ENCODE measurements at regions of chr17 and their contacts with region 1.

Region 1: DNA sequence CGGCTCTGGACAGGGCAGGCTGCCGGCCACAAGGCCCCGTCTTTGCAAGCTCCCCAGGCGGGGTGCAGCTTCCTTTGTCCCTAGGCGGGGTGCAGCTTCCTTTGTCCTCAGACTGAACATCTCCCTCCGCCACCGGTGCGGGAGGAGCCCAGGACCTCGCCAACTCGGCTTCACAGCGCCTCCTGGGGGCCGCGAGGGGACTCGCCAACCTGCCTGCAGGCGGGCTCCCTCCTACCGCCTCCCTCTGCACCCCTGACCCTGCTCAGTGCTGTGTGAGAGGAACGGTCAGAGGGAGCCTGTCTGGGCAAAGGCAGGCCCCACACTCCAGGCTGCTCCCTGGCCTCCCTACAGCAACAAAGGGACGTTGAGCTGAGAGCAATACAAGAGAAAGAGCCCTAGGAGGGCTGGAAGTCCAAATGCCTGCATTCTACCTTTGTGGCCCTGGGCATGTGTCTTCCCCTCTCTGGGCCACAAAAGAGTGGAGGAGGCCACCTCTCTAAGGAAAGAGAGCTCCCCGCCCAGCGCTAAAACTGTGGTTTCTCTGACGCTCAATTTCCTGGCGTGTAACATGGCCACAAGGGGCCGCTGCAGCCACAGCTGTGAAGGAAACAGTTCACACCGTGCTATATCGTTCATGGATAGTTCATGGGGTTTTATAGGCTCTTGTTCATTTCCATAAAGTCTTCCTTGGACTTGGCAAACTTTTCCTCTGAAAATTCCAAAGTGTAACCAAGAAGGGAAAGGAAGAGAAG is 20.9 kb upstream of the KRT19 start:
- DNase-seq: peak; percentile 77
- H3K4me3 ChIP-seq: no peak overlapping the region
- H3K27ac ChIP-seq: peak overlapping the region; percentile 85
- H3K27me3 ChIP-seq: no peaks in the 10 kb centered on the region
- CTCF ChIP-seq: peak; percentile 86

Region 2: DNA sequence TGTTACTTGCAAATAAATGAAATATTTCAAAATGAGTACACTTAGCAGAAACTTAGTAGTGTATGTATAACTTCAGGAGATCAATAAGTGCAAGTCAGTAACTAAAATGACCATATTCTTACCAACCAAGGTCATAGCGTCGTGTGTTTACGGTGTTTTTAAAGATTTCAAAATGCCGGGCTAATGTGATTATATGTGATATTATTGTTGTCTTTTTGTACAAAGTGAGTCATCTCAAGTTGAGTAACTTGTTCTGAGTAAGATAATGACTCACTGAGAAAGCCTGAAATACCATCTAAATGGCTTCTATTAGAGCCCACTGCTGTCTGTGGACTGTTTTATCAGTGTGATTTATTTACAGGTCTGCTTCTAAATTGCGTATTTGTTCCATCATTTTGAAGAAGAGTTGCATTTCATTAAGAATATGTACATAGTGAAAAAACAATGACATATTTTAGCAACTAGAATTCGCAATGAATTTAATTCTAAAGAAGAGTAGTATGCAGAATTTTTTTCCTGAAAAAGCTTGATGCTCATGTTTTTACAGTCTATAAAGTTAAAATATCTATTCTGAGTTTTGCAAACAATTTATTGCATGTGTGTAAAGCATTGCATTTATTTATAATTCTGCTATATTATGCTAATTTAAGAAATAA is 694.7 kb before region 1 on chr17:
- CTCF ChIA-PET with region 1: interaction called, 162 read pairs
- POLR2A ChIA-PET with region 1: interaction called, 4 read pairs
- DNase-seq: peak; percentile 47
- H3K4me3 ChIP-seq: no peak overlapping the region
- H3K27ac ChIP-seq: no peak overlapping the region
- H3K27me3 ChIP-seq: no peaks in the 10 kb centered on the region
- CTCF ChIP-seq: no peak

Region 3: GRCh38 chr17:40915199-40915661 is 633.8 kb before region 1 on chr17:
- CTCF ChIA-PET with region 1: interaction called, 93 read pairs
- POLR2A ChIA-PET with region 1: interaction called, 5 read pairs
- DNase-seq: peak; percentile 87
- H3K4me3 ChIP-seq: no peak overlapping the region
- H3K27ac ChIP-seq: no peak overlapping the region
- H3K27me3 ChIP-seq: no peaks in the 10 kb centered on the region
- CTCF ChIP-seq: no peak

Region 4: DNA sequence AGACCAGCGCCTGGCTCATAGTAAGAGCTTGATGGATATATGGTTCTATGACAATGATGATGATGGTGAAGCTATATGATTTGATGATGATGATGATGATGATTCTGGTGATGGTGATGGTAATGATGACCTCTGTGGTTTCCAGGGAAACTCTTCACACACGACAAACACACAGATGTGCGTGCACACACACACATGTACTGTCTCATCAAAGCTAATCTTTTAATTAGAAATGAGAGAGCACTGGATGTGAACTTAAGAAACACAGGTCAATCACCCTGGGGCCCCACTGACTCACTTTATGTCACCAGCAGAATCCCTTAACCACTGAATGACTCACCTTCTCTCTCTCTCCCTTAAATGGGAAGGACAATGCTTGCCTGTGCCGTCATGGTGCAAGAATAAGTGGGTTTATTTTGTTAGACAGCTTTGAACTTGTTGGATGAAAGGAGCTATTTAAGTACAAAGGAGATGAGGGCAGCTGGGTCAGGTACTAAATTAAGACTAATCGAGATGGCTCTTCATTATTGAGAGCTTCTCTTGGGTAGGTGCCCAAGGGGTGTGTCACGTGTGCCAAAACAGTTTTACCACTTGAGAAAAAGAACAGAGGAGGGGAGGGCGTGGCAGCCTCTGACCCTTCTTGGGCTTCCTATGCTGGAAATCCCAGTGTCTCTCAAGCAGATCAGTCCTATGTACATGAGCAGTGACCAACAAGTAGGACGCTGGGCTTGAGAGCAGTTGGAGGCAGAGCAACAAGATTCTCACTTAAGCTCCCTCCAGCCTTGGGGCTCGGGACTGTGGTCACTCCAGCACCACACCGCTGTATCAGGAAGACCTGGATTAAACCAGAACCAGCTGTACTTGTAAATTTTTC is 145.0 kb before region 1 on chr17:
- CTCF ChIA-PET with region 1: interaction called, 19 read pairs
- POLR2A ChIA-PET with region 1: no interaction called
- DNase-seq: peak; percentile 69
- H3K4me3 ChIP-seq: no peak overlapping the region
- H3K27ac ChIP-seq: peak overlapping the region; percentile 59
- H3K27me3 ChIP-seq: no peaks in the 10 kb centered on the region
- CTCF ChIP-seq: no peak

Region 5: DNA sequence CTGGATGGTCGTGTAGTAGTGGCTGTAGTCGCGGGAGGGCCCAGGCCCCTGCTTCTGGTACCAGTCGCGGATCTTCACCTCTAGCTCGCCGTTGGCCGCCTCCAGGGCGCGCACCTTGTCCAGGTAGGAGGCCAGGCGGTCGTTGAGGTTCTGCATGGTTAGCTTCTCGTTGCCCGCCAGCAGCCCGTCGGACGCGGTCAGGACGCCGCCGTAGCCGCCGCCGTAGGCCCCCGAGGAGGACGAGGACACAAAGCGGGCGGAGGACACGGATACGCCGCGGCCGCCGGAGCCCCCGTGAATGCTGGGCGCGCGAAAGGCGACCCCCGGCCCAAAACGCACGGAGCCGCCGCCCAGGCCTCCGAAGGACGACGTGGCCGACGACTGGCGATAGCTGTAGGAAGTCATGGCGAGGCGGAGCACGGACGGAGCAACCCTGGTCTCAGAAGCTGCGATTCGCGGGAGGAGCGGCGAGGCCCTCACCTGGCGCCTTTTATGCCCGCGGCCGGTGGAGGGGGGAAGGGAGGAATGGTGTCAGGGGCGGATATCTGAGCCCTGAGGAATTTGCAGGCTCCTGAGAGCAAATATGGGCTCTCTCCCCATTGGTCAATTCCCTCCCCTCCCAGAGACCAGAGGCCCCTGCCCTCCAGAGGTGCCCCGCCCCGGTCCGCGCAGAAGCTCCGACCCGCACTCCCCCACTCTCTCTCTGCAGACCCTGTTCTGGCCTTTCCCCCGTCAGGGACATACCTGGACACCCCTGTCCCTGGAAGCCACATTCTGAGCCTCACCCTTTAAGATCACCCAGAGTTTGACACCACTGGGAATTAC is 21.0 kb before region 1 on chr17 and contains the start of gene KRT19:
- CTCF ChIA-PET with region 1: interaction called, 26 read pairs
- POLR2A ChIA-PET with region 1: no interaction called
- DNase-seq: no peak
- H3K4me3 ChIP-seq: peak within 1 kb of the TSS; percentile 43
- H3K27ac ChIP-seq: no peak within 1 kb of the TSS
- H3K27me3 ChIP-seq: no peaks in the 10 kb centered on the region
- CTCF ChIP-seq: no peak
- polyA plus RNA-seq, gene KRT19: 19.7 and 27.6 TPM in 2 replicates

Region 6: GRCh38 chr17:41567317-41567716 is 18.3 kb after region 1 on chr17:
- CTCF ChIA-PET with region 1: interaction called, 34 read pairs
- POLR2A ChIA-PET with region 1: no interaction called
- DNase-seq: no peak
- H3K4me3 ChIP-seq: no peak overlapping the region
- H3K27ac ChIP-seq: no peak overlapping the region
- H3K27me3 ChIP-seq: peaks cover 48% of the 10 kb centered on the region
- CTCF ChIP-seq: no peak

Region 7: GRCh38 chr17:41627838-41628370 is 78.9 kb after region 1 on chr17:
- CTCF ChIA-PET with region 1: no interaction called
- POLR2A ChIA-PET with region 1: no interaction called
- DNase-seq: no peak
- H3K4me3 ChIP-seq: no peak overlapping the region
- H3K27ac ChIP-seq: no peak overlapping the region
- H3K27me3 ChIP-seq: peaks cover 9% of the 10 kb centered on the region
- CTCF ChIP-seq: no peak

Region 8: DNA sequence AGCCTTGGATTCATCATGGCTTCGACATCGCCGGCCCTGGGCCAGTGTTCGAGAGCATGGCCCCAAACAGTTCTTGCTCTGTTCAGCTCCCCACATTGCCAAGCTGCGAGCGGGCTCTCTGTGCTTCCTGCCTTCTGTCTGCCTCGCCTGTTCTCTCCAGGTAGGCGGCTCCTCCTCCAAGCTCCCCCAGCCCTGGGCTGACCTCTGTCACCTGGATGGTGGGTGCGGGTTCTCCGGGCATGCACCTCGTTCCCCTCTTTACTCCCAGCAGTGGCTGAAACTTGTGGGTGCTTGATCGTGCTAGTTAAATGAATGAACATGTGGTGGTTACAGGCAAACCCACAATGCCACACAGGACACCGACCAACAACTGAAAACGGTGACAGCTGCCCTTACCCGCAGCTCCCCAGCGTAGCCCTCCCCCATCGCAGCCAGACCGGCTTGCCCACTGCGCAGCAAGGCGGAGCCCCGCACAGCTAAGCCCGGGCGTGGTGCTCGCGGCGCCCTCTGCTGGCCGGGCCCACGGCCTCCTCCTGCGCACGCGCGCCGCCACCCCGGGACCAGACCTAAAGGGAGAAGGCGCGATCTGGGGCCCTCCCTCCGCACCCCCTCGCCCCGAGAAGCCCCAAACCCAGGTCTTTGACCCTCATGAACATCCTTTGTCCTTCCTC is 116.7 kb after region 1 on chr17:
- CTCF ChIA-PET with region 1: interaction called, 230 read pairs
- POLR2A ChIA-PET with region 1: no interaction called
- DNase-seq: peak; percentile 46
- H3K4me3 ChIP-seq: peak overlapping the region; percentile 60
- H3K27ac ChIP-seq: peak overlapping the region; percentile 85
- H3K27me3 ChIP-seq: no peaks in the 10 kb centered on the region
- CTCF ChIP-seq: peak; percentile 86